ENCODE measurements at regions of chr13 and their contacts with region 1.

Region 1: GRCh38 chr13:21060987-21061763 is at the start of gene LATS2:
- DNase-seq: peak; percentile 49 to 73 (median 54)
- H3K4me3 ChIP-seq: peak within 1 kb of the TSS in 1 of 2 donors; percentile 43
- H3K4me3 Mint-ChIP-seq: peak within 1 kb of the TSS; percentile 82 to 91 (median 84)
- H3K27ac ChIP-seq: peak within 1 kb of the TSS; percentile 9
- H3K27ac Mint-ChIP-seq: peak within 1 kb of the TSS in 6 of 7 donors; percentile 22 to 74 (median 54)
- H3K4me1 ChIP-seq: no peaks in the 10 kb centered on the region
- H3K4me1 Mint-ChIP-seq: peaks cover 5 to 25% (median 6%) of the 10 kb centered on the region in 4 donors
- H3K27me3 ChIP-seq: no peaks in the 10 kb centered on the region
- H3K27me3 Mint-ChIP-seq: peaks cover 13 to 15% of the 10 kb centered on the region in 2 donors
- total RNA-seq, gene LATS2: 3.4 to 4.5 TPM

Region 2: DNA sequence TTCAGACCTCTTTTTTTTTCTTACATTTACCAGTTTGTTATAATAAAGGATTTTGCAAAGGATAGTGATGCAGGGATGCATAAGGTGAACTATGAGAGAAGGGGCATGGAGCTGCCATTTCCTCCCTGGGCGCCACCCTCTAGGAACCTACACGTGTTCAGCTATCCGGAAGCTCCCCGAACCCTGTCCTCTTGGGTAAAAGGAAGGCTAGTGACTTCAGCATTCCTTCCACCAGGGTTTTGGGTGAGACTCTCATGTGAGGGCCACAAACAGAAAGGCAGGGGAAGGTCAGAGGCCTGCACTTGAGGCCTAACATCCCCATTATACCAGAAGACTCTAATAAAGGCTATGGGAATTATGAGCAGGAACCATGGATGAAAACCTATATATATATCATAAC is 437.0 kb before region 1 on chr13:
- CTCF ChIA-PET with region 1: no interaction called
- POLR2A ChIA-PET with region 1: no interaction called
- intact Hi-C with region 1: no loop called
- DNase-seq: no peak
- H3K4me3 ChIP-seq: no peak overlapping the region
- H3K4me3 Mint-ChIP-seq: no peak overlapping the region
- H3K27ac ChIP-seq: no peak overlapping the region
- H3K27ac Mint-ChIP-seq: no peak overlapping the region
- H3K4me1 ChIP-seq: no peaks in the 10 kb centered on the region
- H3K4me1 Mint-ChIP-seq: no peaks in the 10 kb centered on the region
- H3K27me3 ChIP-seq: no peaks in the 10 kb centered on the region
- H3K27me3 Mint-ChIP-seq: no peaks in the 10 kb centered on the region

Region 3: GRCh38 chr13:20860844-20861243 is 200.3 kb before region 1 on chr13:
- CTCF ChIA-PET with region 1: no interaction called
- POLR2A ChIA-PET with region 1: no interaction called
- intact Hi-C with region 1: no loop called
- DNase-seq: no peak
- H3K4me3 ChIP-seq: no peak overlapping the region
- H3K4me3 Mint-ChIP-seq: no peak overlapping the region
- H3K27ac ChIP-seq: no peak overlapping the region
- H3K27ac Mint-ChIP-seq: peak overlapping the region in 1 of 7 donors; percentile 46
- H3K4me1 ChIP-seq: no peaks in the 10 kb centered on the region
- H3K4me1 Mint-ChIP-seq: peaks cover 0 to 18% (median 11%) of the 10 kb centered on the region in 4 donors
- H3K27me3 ChIP-seq: no peaks in the 10 kb centered on the region
- H3K27me3 Mint-ChIP-seq: no peaks in the 10 kb centered on the region

Region 4: GRCh38 chr13:21075011-21075898 is 14.1 kb after region 1 on chr13:
- CTCF ChIA-PET with region 1: no interaction called
- POLR2A ChIA-PET with region 1: interaction called, 9 read pairs
- intact Hi-C with region 1: loop called (anchors 2 kb)
- DNase-seq: peak in 4 of 5 donors; percentile 8 to 45 (median 38)
- H3K4me3 ChIP-seq: peak overlapping the region in 1 of 2 donors; percentile 43
- H3K4me3 Mint-ChIP-seq: peak overlapping the region; percentile 52 to 90 (median 80)
- H3K27ac ChIP-seq: peak overlapping the region; percentile 9
- H3K27ac Mint-ChIP-seq: peak overlapping the region; percentile 39 to 92 (median 83)
- H3K4me1 ChIP-seq: peaks cover 15% of the 10 kb centered on the region
- H3K4me1 Mint-ChIP-seq: peaks cover 13 to 30% (median 23%) of the 10 kb centered on the region in 4 donors
- H3K27me3 ChIP-seq: no peaks in the 10 kb centered on the region
- H3K27me3 Mint-ChIP-seq: peaks cover 9 to 15% of the 10 kb centered on the region in 2 donors